ENCODE measurements at regions of chr16 and their contacts with region 1.

Region 1: DNA sequence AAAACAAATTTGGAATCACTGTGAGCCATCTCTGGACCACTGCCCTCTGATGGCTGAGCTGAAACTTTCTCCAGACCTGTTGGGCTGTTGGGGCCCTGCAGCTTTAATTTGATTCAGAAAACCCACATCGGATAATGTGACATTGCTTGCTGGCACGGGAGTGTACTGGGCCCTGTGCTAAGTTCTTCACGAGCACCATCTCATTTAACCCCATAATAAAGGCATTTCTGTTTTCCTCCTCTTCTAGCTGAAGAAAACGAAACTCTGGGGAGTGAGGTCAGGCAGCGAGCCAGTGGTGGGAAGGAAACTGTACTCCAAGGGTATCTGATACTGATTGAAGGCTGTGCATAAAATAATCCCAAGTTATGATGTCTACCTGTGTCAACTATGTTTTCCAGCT is 34.5 kb upstream of the TNRC6A start:
- DNase-seq: no peak
- ATAC-seq: peak in 1 of 2 experiments; percentile 52; a peak in 3 of 6 replicates
- H3K4me3 ChIP-seq: no peak overlapping the region
- H3K27ac ChIP-seq: peak overlapping the region in 1 of 2 experiments; percentile 47; a peak in 2 of 6 replicates
- H3K4me1 ChIP-seq: peaks cover 3% of the 10 kb centered on the region; the same call in 2 of the 3 replicates
- CTCF ChIP-seq: no peak
- EP300 ChIP-seq: no peak
- POLR2A ChIP-seq: no peak
- RAD21 ChIP-seq: no peak

Region 2: DNA sequence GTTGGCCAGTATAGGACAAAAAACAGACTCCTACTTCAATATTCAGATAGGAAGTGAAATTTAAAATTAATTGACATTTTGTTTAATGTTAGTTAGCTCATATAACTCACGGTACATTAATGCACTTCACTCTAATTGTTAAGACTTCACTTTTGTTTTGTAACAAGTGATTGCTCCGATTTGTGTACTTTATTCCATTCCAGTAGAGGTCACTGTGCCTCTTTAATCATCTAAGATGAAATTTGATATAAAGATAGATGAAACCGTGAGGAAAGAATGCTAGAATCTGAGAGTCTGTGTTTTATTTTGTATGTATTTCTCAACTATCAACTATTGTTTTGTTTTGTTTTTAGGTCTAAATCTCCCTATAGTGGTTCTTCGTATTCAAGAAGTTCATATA is 126.5 kb before region 1 on chr16:
- CTCF ChIA-PET with region 1: interaction called, 10 read pairs
- POLR2A ChIA-PET with region 1: no interaction called
- DNase-seq: peak in 1 of 2 experiments; percentile 53
- ATAC-seq: peak in 1 of 2 experiments; percentile 33; a peak in 1 of 6 replicates
- H3K4me3 ChIP-seq: no peak overlapping the region
- H3K27ac ChIP-seq: no peak overlapping the region
- H3K4me1 ChIP-seq: no peaks in the 10 kb centered on the region
- CTCF ChIP-seq: peak; percentile 65
- EP300 ChIP-seq: no peak
- POLR2A ChIP-seq: no peak
- RAD21 ChIP-seq: peak; percentile 69 to 70

Region 3: GRCh38 chr16:24717411-24717810 is 22.5 kb after region 1 on chr16:
- CTCF ChIA-PET with region 1: no interaction called
- POLR2A ChIA-PET with region 1: no interaction called
- DNase-seq: no peak
- ATAC-seq: no peak
- H3K4me3 ChIP-seq: no peak overlapping the region
- H3K27ac ChIP-seq: no peak overlapping the region
- H3K4me1 ChIP-seq: no peaks in the 10 kb centered on the region
- CTCF ChIP-seq: no peak
- EP300 ChIP-seq: no peak
- POLR2A ChIP-seq: no peak
- RAD21 ChIP-seq: no peak

Region 4: DNA sequence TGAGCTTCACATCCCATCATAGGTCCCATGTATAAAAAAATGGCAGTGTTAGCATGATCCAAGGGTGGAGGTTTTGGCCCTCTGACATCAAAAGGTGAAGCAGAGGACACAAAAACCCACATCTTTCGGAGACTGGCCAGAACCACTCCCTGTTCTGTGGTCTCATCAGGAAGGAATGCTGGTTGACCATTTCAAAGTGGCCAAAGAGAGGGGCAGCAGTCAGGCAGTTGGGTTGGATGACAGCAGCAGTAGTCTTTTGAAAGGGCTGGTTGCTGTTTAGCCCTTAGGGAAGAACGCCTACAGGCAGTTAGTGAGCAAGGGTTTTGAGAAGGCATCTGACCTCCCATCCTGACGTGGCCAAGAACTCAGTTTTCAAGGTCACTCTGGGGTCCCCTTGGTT is 457.1 kb after region 1 on chr16:
- CTCF ChIA-PET with region 1: no interaction called
- POLR2A ChIA-PET with region 1: no interaction called
- DNase-seq: no peak
- ATAC-seq: no peak
- H3K4me3 ChIP-seq: no peak overlapping the region
- H3K27ac ChIP-seq: no peak overlapping the region
- H3K4me1 ChIP-seq: no peaks in the 10 kb centered on the region
- CTCF ChIP-seq: no peak
- EP300 ChIP-seq: no peak
- POLR2A ChIP-seq: no peak
- RAD21 ChIP-seq: no peak